CD8-positive, alpha-beta T cell (primary cell): ENCODE measurements at regions of chr9 and their contacts with region 1.

Region 1: DNA sequence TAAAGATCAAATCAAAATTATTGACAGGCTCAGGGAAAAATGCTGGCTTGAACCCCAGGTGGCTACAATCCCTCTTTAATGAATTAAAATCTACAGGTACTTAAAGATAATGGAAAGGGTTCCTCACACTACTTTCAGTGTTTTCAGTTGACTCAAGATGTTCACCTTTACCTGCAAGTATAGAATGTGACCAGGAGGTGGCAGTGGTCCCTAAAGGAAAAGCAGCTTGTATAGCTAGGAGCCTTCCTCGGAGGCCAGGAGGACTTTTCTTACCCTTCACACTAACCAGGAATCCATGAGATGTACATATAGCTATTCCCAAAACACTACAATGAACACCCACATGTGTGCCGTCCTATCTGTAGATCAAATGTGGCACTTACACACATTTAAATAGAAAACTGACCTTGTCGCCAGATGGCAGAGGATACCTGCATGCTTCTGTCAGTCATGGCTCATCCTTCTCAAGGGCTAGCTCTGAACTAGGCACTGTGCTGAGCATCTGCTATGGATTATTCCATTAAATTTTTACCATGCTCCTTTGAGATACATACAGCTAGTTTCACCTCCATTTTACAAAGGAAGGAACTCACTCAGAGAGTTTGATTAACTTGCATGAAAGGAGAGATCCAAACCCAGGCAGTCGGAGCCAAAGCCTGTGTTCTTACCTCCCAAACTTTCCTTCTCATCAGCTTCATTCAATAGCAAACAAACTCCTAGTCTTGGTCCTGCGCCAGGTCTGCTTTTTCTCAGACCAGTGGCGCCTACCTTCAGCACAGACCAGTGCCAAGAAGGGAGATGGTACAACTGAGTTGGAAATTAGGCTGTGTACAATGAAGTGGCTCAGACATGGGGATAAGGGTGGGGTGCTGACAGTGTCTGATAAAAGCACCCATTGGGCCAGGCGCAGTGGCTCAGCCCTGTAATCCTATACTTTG is 24.5 kb downstream of the C9orf152 start:
- DNase-seq: peak in 7 of 9 experiments; percentile 8 to 64 (median 35)
- ATAC-seq: no peak
- H3K4me3 ChIP-seq: no peak overlapping the region
- H3K4me3 Mint-ChIP-seq: no peak overlapping the region
- H3K27ac ChIP-seq: no peak overlapping the region
- H3K27ac Mint-ChIP-seq: no peak overlapping the region
- H3K4me1 ChIP-seq: no peaks in the 10 kb centered on the region
- H3K4me1 Mint-ChIP-seq: no peaks in the 10 kb centered on the region
- H3K27me3 ChIP-seq: no peaks in the 10 kb centered on the region
- H3K27me3 Mint-ChIP-seq: no peaks in the 10 kb centered on the region
- CTCF ChIP-seq: peak; percentile 75

Region 2: GRCh38 chr9:110170357-110171257 is 12.9 kb before region 1 on chr9:
- CTCF ChIA-PET with region 1: interaction called, 10 read pairs
- POLR2A ChIA-PET with region 1: no interaction called
- intact Hi-C with region 1: no loop called
- DNase-seq: no peak
- ATAC-seq: no peak
- H3K4me3 ChIP-seq: no peak overlapping the region
- H3K4me3 Mint-ChIP-seq: no peak overlapping the region
- H3K27ac ChIP-seq: no peak overlapping the region
- H3K27ac Mint-ChIP-seq: no peak overlapping the region
- H3K4me1 ChIP-seq: no peaks in the 10 kb centered on the region
- H3K4me1 Mint-ChIP-seq: peaks cover 4% of the 10 kb centered on the region
- H3K27me3 ChIP-seq: no peaks in the 10 kb centered on the region
- H3K27me3 Mint-ChIP-seq: no peaks in the 10 kb centered on the region
- CTCF ChIP-seq: no peak

Region 3: DNA sequence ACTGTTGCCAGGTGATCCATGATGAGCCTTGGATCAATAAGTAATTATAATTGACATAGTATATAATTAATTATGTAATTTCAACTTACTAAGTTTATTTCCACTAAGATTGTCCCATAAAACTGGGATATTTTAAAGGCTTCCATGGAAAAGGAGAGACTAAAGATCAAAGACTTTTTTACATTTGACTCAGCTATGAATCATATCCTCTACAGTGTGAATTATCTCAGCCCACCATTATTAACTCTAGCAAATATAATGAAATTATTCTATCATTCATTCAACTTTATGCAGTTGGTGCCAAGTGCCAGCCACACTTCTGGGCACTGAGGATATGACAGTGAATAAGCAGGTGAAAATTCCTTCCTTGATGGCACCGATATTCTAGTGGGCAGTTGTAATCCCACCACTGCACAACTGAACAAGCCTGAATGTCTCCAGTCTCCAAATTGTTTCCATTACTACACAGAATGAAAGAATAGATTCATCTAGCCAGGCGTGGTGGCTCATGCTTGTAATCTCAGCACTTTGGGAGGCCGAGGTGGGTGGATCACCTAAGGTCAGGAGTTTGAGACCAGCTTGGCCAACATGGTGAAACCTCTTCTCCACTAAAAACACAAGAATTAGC is 94.7 kb after region 1 on chr9:
- CTCF ChIA-PET with region 1: no interaction called
- POLR2A ChIA-PET with region 1: no interaction called
- intact Hi-C with region 1: no loop called
- DNase-seq: no peak
- ATAC-seq: no peak
- H3K4me3 ChIP-seq: no peak overlapping the region
- H3K4me3 Mint-ChIP-seq: no peak overlapping the region
- H3K27ac ChIP-seq: no peak overlapping the region
- H3K27ac Mint-ChIP-seq: no peak overlapping the region
- H3K4me1 ChIP-seq: no peaks in the 10 kb centered on the region
- H3K4me1 Mint-ChIP-seq: no peaks in the 10 kb centered on the region
- H3K27me3 ChIP-seq: peaks cover 0 to 3% of the 10 kb centered on the region in 2 experiments
- H3K27me3 Mint-ChIP-seq: peaks cover 8% of the 10 kb centered on the region
- CTCF ChIP-seq: no peak

Region 4: DNA sequence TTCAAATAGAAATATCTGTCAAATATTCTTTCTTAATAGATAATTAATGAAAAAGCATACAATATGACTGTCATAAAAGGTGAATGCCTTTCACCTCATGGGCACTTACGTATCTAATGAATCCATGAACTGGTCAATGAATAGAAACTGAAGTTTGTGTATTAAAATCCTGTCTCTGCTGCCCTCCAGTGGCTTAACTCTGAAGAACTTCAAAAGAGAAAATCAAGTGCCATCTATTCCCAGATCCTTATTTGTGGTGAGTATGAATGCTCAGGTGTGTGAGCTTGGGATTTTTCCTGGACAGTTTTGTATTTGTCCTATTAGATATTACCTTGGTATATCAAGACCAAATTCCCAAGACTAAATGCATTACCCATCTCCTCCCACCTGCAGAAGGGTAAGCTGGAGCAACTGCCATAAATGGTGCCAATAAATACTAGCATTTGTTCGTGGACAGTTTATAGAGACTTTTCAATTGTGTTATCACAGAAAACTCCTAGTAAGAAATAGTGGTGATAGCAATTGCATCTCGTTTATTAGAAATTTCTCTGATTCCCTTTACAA is 440.1 kb after region 1 on chr9:
- CTCF ChIA-PET with region 1: interaction called, 7 read pairs
- POLR2A ChIA-PET with region 1: no interaction called
- intact Hi-C with region 1: loop called in 1 of 2 experiments (anchors 5 kb)
- DNase-seq: peak in 2 of 9 experiments; percentile 5 to 25
- ATAC-seq: no peak
- H3K4me3 ChIP-seq: no peak overlapping the region
- H3K4me3 Mint-ChIP-seq: no peak overlapping the region
- H3K27ac ChIP-seq: no peak overlapping the region
- H3K27ac Mint-ChIP-seq: no peak overlapping the region
- H3K4me1 ChIP-seq: no peaks in the 10 kb centered on the region
- H3K4me1 Mint-ChIP-seq: no peaks in the 10 kb centered on the region
- H3K27me3 ChIP-seq: no peaks in the 10 kb centered on the region
- H3K27me3 Mint-ChIP-seq: no peaks in the 10 kb centered on the region
- CTCF ChIP-seq: no peak

Region 5: GRCh38 chr9:111298731-111299598 is 1115.5 kb after region 1 on chr9:
- CTCF ChIA-PET with region 1: no interaction called
- POLR2A ChIA-PET with region 1: no interaction called
- intact Hi-C with region 1: loop called in 1 of 2 experiments (anchors 2 kb)
- DNase-seq: peak in 2 of 9 experiments; percentile 27 to 43
- ATAC-seq: no peak
- H3K4me3 ChIP-seq: no peak overlapping the region
- H3K4me3 Mint-ChIP-seq: no peak overlapping the region
- H3K27ac ChIP-seq: no peak overlapping the region
- H3K27ac Mint-ChIP-seq: no peak overlapping the region
- H3K4me1 ChIP-seq: no peaks in the 10 kb centered on the region
- H3K4me1 Mint-ChIP-seq: no peaks in the 10 kb centered on the region
- H3K27me3 ChIP-seq: no peaks in the 10 kb centered on the region
- H3K27me3 Mint-ChIP-seq: no peaks in the 10 kb centered on the region
- CTCF ChIP-seq: peak; percentile 65